ENCODE measurements at regions of chr15 and their contacts with region 1.

Region 1: GRCh38 chr15:58070801-58071418 is 5.4 kb upstream of the ALDH1A2 start:
- DNase-seq: peak; percentile 57 to 76
- H3K4me3 ChIP-seq: no peak overlapping the region
- H3K4me1 ChIP-seq: no peaks in the 10 kb centered on the region
- H3K27me3 ChIP-seq: peaks cover 28% of the 10 kb centered on the region

Region 2: DNA sequence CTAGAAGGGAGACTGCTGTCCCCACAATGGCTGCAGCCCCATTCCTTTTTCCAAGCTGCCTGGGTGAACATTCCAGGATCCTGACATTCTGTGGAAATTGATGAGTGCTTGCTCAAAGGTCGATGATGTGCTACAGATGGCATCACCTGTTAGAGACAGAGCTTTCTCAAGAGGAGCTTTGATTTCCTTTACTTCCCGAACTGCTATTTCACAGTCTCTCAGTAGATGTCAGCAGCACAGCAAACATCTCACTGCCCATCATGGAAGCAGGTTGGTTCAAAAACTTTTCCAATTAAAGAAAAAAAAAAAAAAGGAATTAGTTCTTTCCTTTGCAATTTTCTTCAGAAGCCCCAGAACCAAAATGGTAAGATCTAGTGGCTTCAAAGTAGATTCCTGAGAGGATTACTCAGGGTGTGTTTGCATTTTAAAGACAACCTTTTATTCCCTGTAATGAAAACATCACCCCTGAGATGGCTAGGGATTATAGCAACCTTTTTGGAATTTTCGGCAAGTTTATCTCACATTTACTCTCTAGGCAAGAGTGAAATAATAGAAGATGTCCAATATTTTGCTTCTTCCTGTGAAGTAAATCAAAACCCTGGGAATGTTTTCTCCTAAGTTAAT is 319.6 kb before region 1 on chr15:
- in situ Hi-C with region 1: loop called (anchors 10 kb)
- DNase-seq: peak; percentile 23 to 59
- H3K4me3 ChIP-seq: no peak overlapping the region
- H3K4me1 ChIP-seq: peaks cover 16% of the 10 kb centered on the region
- H3K27me3 ChIP-seq: peaks cover 18% of the 10 kb centered on the region

Region 3: DNA sequence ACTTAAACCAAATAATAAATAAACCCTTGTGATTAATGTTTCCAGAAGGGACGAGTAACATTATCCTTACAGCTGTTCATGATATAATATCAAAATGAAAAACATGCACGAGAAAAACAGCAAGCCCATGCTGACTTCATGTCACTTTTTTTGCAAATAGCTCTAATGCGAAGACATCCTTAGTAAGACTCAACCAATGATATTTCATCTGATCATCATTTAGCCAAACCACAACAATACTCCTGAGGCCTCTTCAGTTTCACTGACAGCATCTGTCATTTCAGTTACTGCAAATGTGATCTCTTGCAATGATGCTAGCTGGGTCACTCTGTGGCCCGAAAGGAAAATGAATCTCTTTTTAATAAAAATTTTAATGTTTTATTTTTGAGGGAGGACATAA is 290.4 kb before region 1 on chr15:
- in situ Hi-C with region 1: no loop called
- DNase-seq: no peak
- H3K4me3 ChIP-seq: no peak overlapping the region
- H3K4me1 ChIP-seq: no peaks in the 10 kb centered on the region
- H3K27me3 ChIP-seq: 0 out of 2 replicates have a peak, but pooled peaks cover 3% of the 10 kb centered on the region

Region 4: DNA sequence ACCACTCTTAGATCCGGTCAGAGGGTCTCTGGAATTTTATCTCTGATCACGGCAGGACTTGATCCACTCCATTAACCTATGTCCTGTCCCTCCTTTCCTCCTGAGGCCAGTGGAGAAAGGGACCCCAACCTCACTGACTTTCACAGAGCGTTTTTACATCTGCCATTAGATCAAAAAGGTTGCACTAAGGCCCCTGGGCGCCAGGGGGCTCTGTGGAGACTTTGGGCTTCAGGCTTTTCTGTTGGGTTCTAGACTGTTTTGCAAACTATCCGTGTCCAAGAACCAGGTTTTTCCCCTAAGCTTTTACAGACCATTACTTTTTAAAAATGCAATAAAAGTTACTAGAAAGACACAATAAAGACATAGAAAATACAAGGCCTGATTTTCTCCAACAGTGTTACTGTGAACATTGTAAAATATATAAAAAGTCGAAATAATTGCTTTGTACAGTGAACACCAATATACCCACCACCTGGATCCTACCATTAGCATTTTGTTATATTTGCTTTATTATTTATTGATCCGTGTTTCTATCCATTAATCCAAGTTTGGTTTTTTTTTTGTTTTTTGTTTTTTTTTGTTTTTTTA is 204.7 kb before region 1 on chr15:
- in situ Hi-C with region 1: loop called (anchors 5 kb)
- DNase-seq: peak; percentile 34 to 79
- H3K4me3 ChIP-seq: no peak overlapping the region
- H3K4me1 ChIP-seq: no peaks in the 10 kb centered on the region
- H3K27me3 ChIP-seq: peaks cover 2% of the 10 kb centered on the region; the same call in 1 of the 2 replicates